AG04449 (cell line): ENCODE measurements at regions of chr11 and their contacts with region 1.

Region 1: GRCh38 chr11:82701847-82702520 is 31.7 kb downstream of the FAM181B start:
- DNase-seq: no peak
- H3K4me3 ChIP-seq: no peak overlapping the region
- CTCF ChIP-seq: peak; percentile 52

Region 2: DNA sequence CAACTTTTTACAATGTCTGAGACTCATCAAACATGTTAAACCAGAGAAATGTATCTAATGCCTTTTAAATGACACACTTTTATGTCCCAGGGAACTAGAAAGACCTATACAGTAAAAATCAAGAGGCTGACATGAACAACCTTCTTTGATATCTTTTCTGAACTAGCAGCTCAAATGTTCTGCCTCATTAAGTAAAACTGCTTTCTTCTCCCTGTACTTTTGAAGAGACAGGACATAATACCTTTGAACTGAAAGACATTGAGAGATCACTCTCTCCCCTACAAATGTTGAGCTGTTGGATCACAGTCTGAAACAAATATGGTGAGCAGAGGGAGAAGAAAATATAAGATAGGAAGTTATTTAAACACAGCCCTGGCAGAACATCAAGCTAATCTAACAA is 91.3 kb before region 1 on chr11:
- CTCF ChIA-PET with region 1: no interaction called
- POLR2A ChIA-PET with region 1: no interaction called
- DNase-seq: no peak
- H3K4me3 ChIP-seq: no peak overlapping the region
- CTCF ChIP-seq: no peak

Region 3: GRCh38 chr11:82682003-82682751 is 19.8 kb before region 1 on chr11:
- CTCF ChIA-PET with region 1: interaction called, 42 read pairs
- POLR2A ChIA-PET with region 1: no interaction called
- DNase-seq: peak; percentile 21
- H3K4me3 ChIP-seq: no peak overlapping the region
- CTCF ChIP-seq: peak; percentile 57

Region 4: GRCh38 chr11:82747471-82747870 is 45.5 kb after region 1 on chr11:
- CTCF ChIA-PET with region 1: no interaction called
- POLR2A ChIA-PET with region 1: no interaction called
- DNase-seq: no peak
- H3K4me3 ChIP-seq: no peak overlapping the region
- CTCF ChIP-seq: no peak

Region 5: GRCh38 chr11:82867495-82868082 is 165.6 kb after region 1 on chr11:
- CTCF ChIA-PET with region 1: no interaction called
- POLR2A ChIA-PET with region 1: no interaction called
- DNase-seq: no peak
- H3K4me3 ChIP-seq: peak overlapping the region; percentile 24
- CTCF ChIP-seq: peak; percentile 52